Posterior cingulate gyrus (tissue), 11 donors: ENCODE measurements at regions of chr4 and their contacts with region 1.

Region 1: DNA sequence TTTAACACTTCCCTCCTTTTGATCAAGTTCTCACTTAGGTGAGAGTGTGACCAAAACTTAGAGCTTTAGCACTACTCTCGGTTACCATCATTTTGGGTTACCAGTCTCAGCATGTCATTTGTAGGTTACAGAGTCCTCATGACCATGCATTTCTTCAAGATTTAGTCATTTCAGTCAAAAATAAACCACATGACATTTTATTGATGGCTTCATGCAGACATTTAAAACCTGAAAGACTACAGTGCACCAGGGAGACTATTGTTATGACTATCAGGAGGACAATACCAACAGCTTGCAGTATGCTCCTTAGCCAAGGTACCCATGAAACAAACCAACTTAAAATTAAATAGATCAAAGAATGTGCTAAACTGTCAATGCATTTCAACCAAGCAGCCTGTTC is 498.1 kb upstream of the FSTL5 start:
- DNase-seq: no peak

Region 2: DNA sequence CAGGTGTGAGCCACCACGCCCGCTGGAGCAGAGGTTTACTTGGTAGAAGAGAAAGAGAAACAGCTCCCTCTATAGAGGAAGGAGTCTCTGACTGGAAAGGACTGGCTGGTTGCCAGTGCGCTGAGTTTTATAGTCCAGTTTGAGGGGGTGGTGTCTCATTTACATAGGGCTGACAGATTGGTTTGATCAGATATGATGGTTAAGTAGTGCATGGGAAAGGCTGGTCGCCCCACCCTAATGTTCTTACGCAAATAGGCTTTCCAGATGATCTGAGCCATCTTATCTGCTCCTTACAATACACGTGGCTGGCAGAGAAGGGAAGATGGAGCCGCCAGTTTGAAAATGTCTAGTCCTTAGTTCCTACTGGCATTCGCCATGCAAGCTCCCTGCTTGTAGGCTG is 65.3 kb after region 1 on chr4:
- intact Hi-C with region 1: loop called (anchors 10 kb)
- DNase-seq: peak in 1 of 10 donors; percentile 67